ENCODE measurements at regions of chr14 and their contacts with region 1.

Region 1: GRCh38 chr14:65164068-65164824 is 61.9 kb upstream of the MAX start:
- DNase-seq: no peak
- H3K4me3 ChIP-seq: no peak overlapping the region
- H3K27me3 ChIP-seq: no peaks in the 10 kb centered on the region
- CTCF ChIP-seq: peak; percentile 57

Region 2: DNA sequence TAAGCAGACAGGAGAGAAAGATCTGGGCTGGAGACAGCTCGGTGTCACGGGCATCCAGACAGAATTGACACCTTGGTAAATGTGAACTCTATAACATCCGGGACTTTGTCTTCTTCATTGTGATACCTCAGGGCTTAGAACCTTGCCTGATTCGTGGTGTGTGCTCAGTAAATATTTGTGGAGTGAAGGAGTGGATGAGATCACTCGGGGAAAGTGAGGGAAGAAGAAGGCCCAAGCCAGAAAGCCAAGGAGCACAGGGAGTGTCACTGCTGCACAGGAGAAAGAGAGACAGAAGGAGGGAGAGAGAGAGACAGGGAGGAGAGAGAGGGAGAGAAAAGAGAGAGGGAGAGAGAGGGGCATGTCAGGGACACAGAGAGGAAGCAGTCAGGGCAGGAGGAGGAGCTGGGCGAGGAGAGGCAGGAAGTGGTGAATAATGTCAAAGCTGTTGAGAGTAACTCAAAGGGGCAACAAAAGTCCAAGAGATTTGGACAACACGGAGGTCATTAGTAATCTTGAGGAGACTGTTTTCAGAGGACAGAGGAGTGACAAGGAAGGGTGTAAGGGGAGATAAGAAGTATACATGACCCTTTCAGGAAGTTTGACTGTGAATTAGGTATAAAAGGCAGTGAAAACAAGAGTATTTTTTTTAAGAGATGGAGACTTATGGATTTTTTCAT is 79.7 kb after region 1 on chr14:
- CTCF ChIA-PET with region 1: no interaction called
- POLR2A ChIA-PET with region 1: no interaction called
- DNase-seq: no peak
- H3K4me3 ChIP-seq: no peak overlapping the region
- H3K27me3 ChIP-seq: no peaks in the 10 kb centered on the region
- CTCF ChIP-seq: no peak

Region 3: GRCh38 chr14:65832431-65833266 is 668.4 kb after region 1 on chr14:
- CTCF ChIA-PET with region 1: interaction called, 10 read pairs
- POLR2A ChIA-PET with region 1: no interaction called
- DNase-seq: no peak
- H3K4me3 ChIP-seq: no peak overlapping the region
- H3K27me3 ChIP-seq: 0 out of 2 replicates have a peak, but pooled peaks cover 2% of the 10 kb centered on the region
- CTCF ChIP-seq: peak; percentile 43

Region 4: GRCh38 chr14:65958664-65959562 is 794.7 kb after region 1 on chr14:
- CTCF ChIA-PET with region 1: interaction called, 25 read pairs
- POLR2A ChIA-PET with region 1: no interaction called
- DNase-seq: no peak
- H3K4me3 ChIP-seq: no peak overlapping the region
- H3K27me3 ChIP-seq: no peaks in the 10 kb centered on the region
- CTCF ChIP-seq: peak; percentile 36